ENCODE measurements at regions of chr13 and their contacts with region 1.

Region 1: DNA sequence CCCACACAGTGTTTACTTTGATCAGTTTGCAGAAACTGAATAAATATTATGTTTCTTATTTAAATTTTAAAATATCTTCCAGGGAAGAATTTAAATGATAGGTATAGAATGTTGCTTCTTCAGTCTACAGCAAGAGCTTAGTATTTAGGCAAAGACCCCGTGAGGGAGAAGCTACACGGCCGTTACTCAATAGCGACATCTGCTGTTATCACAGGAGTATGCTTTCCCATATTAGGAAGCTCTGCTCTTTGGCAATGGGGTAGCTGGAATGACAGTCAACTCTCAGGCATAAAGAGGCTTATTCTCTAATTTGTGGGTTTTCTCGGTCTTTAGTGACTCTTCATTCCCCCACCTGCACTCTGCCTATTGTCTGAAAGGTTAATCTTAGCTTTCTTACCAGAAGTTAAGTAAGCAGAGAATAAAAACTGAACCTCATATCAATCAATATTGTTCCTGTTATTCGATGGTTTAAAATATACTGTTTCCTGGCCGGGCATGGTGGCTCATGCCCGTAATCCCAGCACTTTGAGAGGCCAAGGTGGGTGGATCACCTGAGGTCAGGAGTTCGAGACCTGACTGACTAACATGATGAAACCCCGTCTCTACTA is 13.2 kb upstream of the LHFPL6 start:
- DNase-seq: no peak
- H3K4me3 ChIP-seq: no peak overlapping the region
- CTCF ChIP-seq: peak; percentile 88

Region 2: GRCh38 chr13:39144941-39145533 is 471.2 kb before region 1 on chr13:
- CTCF ChIA-PET with region 1: interaction called, 306 read pairs
- POLR2A ChIA-PET with region 1: no interaction called
- DNase-seq: peak; percentile 24
- H3K4me3 ChIP-seq: no peak overlapping the region
- CTCF ChIP-seq: peak; percentile 76

Region 3: DNA sequence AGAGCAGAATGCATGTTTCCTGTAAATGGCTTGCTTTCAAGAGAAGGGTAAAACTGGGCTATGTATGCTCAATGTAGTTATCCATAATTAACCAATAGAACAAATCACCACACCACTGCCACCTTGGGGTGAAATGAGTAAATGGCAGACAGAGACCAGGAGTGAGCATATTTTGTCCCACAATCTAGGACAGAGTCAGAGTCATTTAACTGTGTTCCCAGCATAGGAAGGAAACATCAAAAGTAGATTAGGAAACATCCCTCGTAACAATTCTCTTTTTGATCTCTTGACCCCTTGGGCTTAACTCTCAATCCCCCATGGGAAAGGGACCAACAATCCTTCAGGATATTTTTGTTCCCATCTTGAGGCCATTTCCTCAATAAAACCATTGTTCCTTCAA is 353.2 kb before region 1 on chr13:
- CTCF ChIA-PET with region 1: interaction called, 12 read pairs
- POLR2A ChIA-PET with region 1: no interaction called
- DNase-seq: no peak
- H3K4me3 ChIP-seq: no peak overlapping the region
- CTCF ChIP-seq: peak; percentile 60

Region 4: GRCh38 chr13:39282400-39282972 is 333.7 kb before region 1 on chr13:
- CTCF ChIA-PET with region 1: interaction called, 12 read pairs
- POLR2A ChIA-PET with region 1: no interaction called
- DNase-seq: no peak
- H3K4me3 ChIP-seq: no peak overlapping the region
- CTCF ChIP-seq: no peak

Region 5: GRCh38 chr13:39422845-39423565 is 193.2 kb before region 1 on chr13:
- CTCF ChIA-PET with region 1: interaction called, 89 read pairs
- POLR2A ChIA-PET with region 1: no interaction called
- DNase-seq: no peak
- H3K4me3 ChIP-seq: no peak overlapping the region
- CTCF ChIP-seq: no peak

Region 6: DNA sequence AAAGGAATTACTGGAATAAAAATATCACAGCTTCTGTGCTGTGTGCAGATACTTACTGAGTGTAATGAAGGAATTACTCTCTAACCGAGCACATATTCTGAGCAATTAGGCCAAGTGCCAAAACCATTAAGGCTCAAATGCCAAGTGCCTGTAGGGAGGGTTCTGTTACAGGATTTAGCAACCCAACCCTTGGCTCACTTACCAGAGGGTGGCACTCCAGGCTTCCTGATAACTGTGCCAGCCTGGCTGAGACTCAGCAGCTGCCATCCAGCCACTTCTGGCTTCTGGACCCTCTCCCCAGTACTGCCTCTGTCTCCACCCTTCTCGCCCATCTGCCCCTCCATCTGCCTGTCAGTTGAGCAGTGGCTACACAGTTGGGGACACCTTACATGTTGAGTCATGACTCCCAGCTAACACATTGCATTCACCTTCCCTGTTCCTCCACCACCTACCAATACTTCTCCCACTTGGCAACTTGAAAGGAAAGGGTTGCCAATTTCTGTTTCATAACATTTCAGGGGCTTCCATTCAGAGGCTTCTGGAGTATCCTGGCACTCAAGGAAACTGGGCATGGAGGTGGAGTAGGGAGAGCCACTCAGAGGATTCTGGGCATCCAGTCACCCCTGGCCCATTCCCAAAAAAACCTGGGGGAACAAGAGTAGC is 149.7 kb after region 1 on chr13:
- CTCF ChIA-PET with region 1: no interaction called
- POLR2A ChIA-PET with region 1: no interaction called
- DNase-seq: no peak
- H3K4me3 ChIP-seq: no peak overlapping the region
- CTCF ChIP-seq: peak; percentile 27

Region 7: DNA sequence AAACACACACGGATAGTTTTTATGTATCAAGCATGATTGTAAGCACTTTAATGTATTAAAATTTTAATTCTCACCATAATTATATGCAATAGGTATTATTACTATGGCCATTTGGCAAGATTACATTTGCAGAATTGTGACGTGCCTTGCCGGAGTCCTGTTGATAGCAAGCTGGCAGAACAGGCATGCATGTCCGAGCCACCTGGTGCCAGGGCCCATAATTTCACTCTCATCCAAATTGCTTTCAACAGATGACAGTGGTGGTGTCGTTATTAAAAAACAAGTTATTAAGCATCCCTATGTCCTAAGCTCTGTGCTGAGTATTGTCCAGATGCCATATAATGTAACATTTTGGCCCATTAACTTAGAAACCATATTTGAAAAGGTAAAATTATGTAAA is 675.9 kb after region 1 on chr13:
- CTCF ChIA-PET with region 1: no interaction called
- POLR2A ChIA-PET with region 1: no interaction called
- DNase-seq: no peak
- H3K4me3 ChIP-seq: no peak overlapping the region
- CTCF ChIP-seq: no peak